ENCODE measurements at regions of chr11 and their contacts with region 1.

Region 1: DNA sequence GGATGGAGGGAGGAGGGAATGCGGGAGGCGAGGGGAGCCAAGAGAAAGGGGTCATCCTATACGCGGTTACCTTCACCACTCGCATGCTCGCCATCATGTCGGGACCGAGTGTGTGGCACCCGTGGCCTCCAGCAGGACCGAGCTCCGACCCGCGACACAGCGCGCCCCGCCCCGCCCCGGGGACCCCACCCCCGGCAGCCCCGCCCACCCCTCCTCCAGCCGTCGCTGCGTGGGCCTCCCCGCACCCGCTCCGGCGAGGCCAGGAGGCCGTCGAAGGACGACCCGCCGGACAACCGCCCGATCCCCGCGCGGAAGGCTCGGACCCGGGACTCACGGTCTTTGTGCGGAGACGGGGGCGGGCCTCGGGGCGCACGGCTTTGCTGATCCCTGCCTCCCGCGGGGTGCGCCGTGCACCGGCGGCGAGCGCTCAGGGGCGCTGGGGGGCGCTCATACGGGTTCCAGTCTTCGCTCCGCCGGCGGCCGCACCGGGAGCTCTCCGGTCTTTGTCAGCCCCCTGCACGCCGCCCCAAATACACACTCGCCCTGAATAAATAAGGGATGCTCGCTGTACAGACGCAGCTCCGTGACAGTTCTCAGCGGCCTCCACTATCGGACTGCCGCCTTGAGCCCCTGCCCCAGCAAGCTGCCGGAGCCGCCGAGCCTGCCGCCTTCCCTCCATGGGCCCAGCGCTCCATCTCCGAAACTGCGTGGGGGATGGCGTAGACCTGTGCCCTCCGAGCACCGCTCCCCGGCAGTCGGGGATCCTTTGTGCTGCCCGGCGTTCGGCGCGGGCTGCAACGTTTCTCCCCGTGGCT is at the start of gene UBE2L6:
- DNase-seq: no peak
- H3K4me3 ChIP-seq: peak within 1 kb of the TSS; percentile 77 to 96 (median 90)
- H3K27ac ChIP-seq: peak within 1 kb of the TSS; percentile 44
- H3K4me1 ChIP-seq: peaks cover 27% of the 10 kb centered on the region
- H3K27me3 ChIP-seq: no peaks in the 10 kb centered on the region
- CTCF ChIP-seq: no peak
- total RNA-seq, gene UBE2L6: 34.2 to 46.8 TPM

Region 2: GRCh38 chr11:57426929-57427726 is 140.6 kb before region 1 on chr11 and contains the start of gene SLC43A3:
- CTCF ChIA-PET with region 1: no interaction called
- dilution Hi-C with region 1: no loop called
- in situ Hi-C with region 1: no loop called
- intact Hi-C with region 1: no loop called
- DNase-seq: peak; percentile 93
- H3K4me3 ChIP-seq: peak within 1 kb of the TSS; percentile 37 to 58 (median 45)
- H3K27ac ChIP-seq: peak within 1 kb of the TSS; percentile 92
- H3K4me1 ChIP-seq: peaks cover 47% of the 10 kb centered on the region
- H3K27me3 ChIP-seq: no peaks in the 10 kb centered on the region
- CTCF ChIP-seq: no peak
- total RNA-seq, gene SLC43A3: 22.7 to 27.6 TPM

Region 3: DNA sequence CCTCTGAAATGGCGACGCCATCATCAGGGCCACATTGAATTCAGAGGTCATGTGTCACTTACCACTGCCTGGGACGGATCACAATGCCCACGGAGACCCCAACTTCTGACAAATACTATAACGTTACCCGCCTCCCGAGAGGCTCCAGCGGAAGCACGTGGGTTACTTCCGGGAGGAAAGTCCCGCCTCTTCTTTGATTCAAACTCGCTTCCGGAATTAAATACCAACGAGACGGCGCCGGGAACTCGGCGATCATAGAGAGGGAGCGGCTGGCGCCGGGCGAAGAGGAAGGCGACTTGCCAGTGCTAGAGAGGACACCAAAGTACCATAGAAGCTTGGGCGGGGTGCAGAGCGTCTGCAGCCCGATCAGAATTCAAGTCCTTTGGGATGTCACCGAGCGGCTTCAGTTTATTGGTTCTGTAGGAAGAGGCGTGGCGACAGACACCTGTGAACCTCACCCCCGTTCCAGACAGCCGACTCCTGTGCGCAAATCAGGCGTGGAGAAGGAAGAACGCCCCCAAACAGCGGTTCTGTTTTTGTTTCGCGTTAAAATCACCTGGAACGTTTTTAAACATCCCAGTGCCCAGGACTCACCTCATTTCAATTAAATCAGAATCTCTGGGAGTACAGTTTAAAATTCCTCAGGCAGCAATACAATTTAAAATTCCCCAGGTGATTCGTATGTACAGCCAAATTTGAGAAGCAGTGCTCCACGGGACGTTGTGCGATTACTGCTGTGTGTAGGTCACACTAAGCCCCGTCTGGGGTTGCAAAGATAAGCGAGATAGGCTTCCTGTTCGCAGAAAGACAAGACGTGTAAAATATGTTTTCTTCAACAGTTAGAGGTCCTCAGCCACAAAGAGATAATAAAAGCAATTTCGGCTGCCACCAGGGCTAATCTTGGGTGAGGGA is 36.9 kb before region 1 on chr11 and contains the start of gene TIMM10:
- CTCF ChIA-PET with region 1: no interaction called
- dilution Hi-C with region 1: no loop called
- in situ Hi-C with region 1: no loop called
- intact Hi-C with region 1: loop called (anchors 2 kb)
- DNase-seq: peak; percentile 99
- H3K4me3 ChIP-seq: peak within 1 kb of the TSS; percentile 55 to 77 (median 75)
- H3K27ac ChIP-seq: peak within 1 kb of the TSS; percentile 65
- H3K4me1 ChIP-seq: peaks cover 21% of the 10 kb centered on the region
- H3K27me3 ChIP-seq: no peaks in the 10 kb centered on the region
- CTCF ChIP-seq: no peak
- total RNA-seq, gene TIMM10: 24.8 to 58.9 TPM